T-cell (primary cell): ENCODE measurements at regions of chr2 and their contacts with region 1.

Region 1: DNA sequence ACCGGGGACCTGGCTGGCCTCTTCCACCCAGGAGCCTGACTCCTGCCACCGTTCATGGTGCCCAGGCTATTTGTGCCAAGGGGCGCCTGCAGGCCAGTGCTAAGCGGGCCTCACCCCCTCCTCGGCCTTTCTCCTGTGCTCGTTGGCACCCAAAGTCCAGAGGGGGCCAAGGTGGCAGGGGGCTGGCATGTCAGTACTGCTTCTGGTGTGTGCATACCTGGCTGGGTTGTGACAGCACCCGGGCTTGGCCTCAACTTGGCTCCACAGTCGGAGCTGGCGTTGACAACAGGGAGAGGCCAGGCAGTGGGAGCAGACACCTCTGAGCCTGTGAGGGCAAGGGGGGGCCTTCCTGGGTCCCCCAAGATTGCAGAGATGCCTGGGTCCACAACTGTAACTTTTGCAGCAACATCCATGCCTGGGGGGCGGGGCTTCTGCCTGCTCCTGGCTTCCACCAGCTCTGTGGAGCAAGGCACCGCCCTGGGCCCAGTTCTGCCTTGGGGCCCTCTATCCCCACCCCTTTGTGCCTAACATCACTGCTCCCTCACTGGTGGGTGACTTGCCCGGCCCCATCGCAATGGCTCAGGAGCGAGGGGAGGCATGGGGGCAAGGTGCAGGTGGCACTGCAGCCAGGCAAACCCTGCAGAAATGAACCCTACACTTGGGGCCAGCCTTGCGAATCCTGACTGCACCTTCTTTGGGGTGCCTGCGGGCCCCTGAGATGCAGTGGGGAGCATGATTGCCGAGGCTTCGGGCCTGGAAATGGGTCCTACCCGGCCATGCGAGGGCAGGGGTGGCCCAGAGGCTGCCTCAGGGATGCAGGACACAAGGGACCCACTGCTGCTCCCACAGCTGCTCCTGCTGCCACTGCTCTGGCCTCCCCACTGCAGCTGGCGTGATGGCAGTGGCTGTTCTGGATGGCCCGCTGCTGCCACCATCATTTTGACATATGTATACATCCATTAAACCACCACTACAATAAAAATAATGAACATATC is 35.9 kb downstream of the PTPN4 start:
- DNase-seq: no peak
- ATAC-seq: no peak
- H3K4me3 ChIP-seq: no peak overlapping the region
- H3K4me3 Mint-ChIP-seq: no peak overlapping the region
- H3K27ac ChIP-seq: no peak overlapping the region
- H3K27ac Mint-ChIP-seq: no peak overlapping the region
- H3K4me1 ChIP-seq: peaks cover 0 to 21% of the 10 kb centered on the region in 2 experiments
- H3K4me1 Mint-ChIP-seq: peaks cover 46 to 48% (median 48%) of the 10 kb centered on the region in 3 donors
- H3K27me3 ChIP-seq: no peaks in the 10 kb centered on the region
- H3K27me3 Mint-ChIP-seq: no peaks in the 10 kb centered on the region

Region 2: DNA sequence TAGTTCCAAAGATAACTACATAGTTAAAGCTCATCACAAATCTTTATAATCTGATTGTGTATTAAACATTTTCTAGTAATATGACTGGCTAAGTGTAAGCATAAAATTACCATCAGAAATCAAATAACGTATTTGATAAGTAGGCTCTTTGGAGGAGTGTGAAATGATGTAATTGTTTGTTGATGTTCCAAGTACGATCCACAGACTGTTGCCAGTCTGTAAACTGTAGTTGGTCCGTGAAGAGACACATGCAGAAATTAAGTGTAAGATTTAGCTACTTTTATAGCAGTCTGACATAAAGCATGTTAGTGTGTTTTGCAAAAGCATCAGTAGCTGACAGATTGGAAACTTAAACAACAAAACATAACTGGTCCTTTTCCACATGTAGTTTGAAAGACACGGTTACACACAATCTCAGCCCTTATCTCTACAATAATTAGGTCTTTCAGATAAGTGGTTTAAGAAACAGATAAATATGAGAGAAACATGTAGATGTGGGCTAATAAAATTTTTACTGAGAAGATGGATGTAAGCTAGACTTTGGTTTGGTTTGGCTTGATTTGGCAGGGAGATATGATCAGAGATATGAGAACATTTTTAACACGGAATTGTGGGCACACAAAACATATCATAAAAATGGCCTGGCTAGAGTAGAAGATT is 102.3 kb after region 1 on chr2:
- CTCF ChIA-PET with region 1: no interaction called
- POLR2A ChIA-PET with region 1: no interaction called
- DNase-seq: no peak
- ATAC-seq: no peak
- H3K4me3 ChIP-seq: no peak overlapping the region
- H3K4me3 Mint-ChIP-seq: no peak overlapping the region
- H3K27ac ChIP-seq: no peak overlapping the region
- H3K27ac Mint-ChIP-seq: no peak overlapping the region
- H3K4me1 ChIP-seq: no peaks in the 10 kb centered on the region
- H3K4me1 Mint-ChIP-seq: no peaks in the 10 kb centered on the region
- H3K27me3 ChIP-seq: no peaks in the 10 kb centered on the region
- H3K27me3 Mint-ChIP-seq: no peaks in the 10 kb centered on the region

Region 3: GRCh38 chr2:120287183-120288015 is 491.8 kb after region 1 on chr2:
- CTCF ChIA-PET with region 1: interaction called in 1 of 2 experiments, 11 read pairs
- POLR2A ChIA-PET with region 1: no interaction called
- DNase-seq: no peak
- ATAC-seq: peak in 2 of 4 experiments; percentile 42 to 43
- H3K4me3 ChIP-seq: no peak overlapping the region
- H3K4me3 Mint-ChIP-seq: peak overlapping the region in 1 of 3 donors; percentile 5
- H3K27ac ChIP-seq: no peak overlapping the region
- H3K27ac Mint-ChIP-seq: peak overlapping the region; percentile 79 to 83
- H3K4me1 ChIP-seq: peaks cover 3 to 22% of the 10 kb centered on the region in 2 experiments
- H3K4me1 Mint-ChIP-seq: peaks cover 21 to 33% (median 26%) of the 10 kb centered on the region in 3 donors
- H3K27me3 ChIP-seq: no peaks in the 10 kb centered on the region
- H3K27me3 Mint-ChIP-seq: no peaks in the 10 kb centered on the region